Adrenal gland (tissue), 19 donors: ENCODE measurements at regions of chr15 and their contacts with region 1.

Region 1: DNA sequence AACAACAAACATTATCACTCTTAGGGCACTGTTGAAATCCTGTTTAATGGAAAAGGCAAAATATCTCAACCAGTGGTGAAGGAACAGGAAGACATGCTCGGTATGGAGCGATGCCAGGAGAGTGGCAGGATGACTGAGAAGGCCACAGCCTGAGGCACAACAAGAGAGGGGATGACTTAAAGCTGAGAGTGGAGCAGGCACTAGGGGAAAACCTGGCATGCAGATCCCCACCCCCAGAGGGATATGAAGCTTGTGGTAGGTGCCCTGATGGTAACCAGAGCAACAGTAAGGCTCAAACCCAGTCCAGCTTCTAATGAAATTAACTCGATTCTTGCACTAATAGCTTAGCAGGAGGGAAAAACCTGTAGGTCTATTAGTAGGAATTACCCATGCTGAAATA is 40.4 kb downstream of the LYSMD4 start:
- DNase-seq: peak in 2 of 7 donors; percentile 34 to 37
- H3K4me3 ChIP-seq: no peak overlapping the region
- H3K27ac ChIP-seq: no peak overlapping the region
- H3K4me1 ChIP-seq: no peaks in the 10 kb centered on the region
- H3K27me3 ChIP-seq: no peaks in the 10 kb centered on the region
- CTCF ChIP-seq: no peak
- POLR2A ChIP-seq: no peak

Region 2: GRCh38 chr15:99565299-99566156 is 127.3 kb before region 1 on chr15 and contains the start of gene MEF2A:
- intact Hi-C with region 1: loop called in 1 of 2 experiments (anchors 10 kb)
- DNase-seq: peak; percentile 95 to 98 (median 97)
- H3K4me3 ChIP-seq: peak within 1 kb of the TSS in 3 of 4 donors; percentile 73 to 95 (median 94)
- H3K27ac ChIP-seq: peak within 1 kb of the TSS; percentile 89 to 99 (median 96)
- H3K4me1 ChIP-seq: peaks cover 23 to 30% of the 10 kb centered on the region in 2 donors
- H3K27me3 ChIP-seq: no peaks in the 10 kb centered on the region
- CTCF ChIP-seq: no peak
- POLR2A ChIP-seq: peak; percentile 84 to 89
- total RNA-seq, gene MEF2A: 36.5 to 91.7 (median 53.8) TPM